ENCODE measurements at regions of chr20 and their contacts with region 1.

Region 1: GRCh38 chr20:15902493-15902892 is 670.8 kb downstream of the KIF16B start:
- DNase-seq: no peak
- H3K4me3 ChIP-seq: no peak overlapping the region
- H3K27ac ChIP-seq: no peak overlapping the region
- H3K4me1 ChIP-seq: no peaks in the 10 kb centered on the region
- H3K27me3 ChIP-seq: no peaks in the 10 kb centered on the region
- CTCF ChIP-seq: no peak
- POLR2A ChIP-seq: no peak

Region 2: GRCh38 chr20:14113416-14113815 is 1789.1 kb before region 1 on chr20:
- intact Hi-C with region 1: loop called (anchors 5 kb)
- DNase-seq: no peak
- H3K4me3 ChIP-seq: no peak overlapping the region
- H3K27ac ChIP-seq: no peak overlapping the region
- H3K4me1 ChIP-seq: no peaks in the 10 kb centered on the region
- H3K27me3 ChIP-seq: no peaks in the 10 kb centered on the region
- CTCF ChIP-seq: no peak
- POLR2A ChIP-seq: no peak

Region 3: DNA sequence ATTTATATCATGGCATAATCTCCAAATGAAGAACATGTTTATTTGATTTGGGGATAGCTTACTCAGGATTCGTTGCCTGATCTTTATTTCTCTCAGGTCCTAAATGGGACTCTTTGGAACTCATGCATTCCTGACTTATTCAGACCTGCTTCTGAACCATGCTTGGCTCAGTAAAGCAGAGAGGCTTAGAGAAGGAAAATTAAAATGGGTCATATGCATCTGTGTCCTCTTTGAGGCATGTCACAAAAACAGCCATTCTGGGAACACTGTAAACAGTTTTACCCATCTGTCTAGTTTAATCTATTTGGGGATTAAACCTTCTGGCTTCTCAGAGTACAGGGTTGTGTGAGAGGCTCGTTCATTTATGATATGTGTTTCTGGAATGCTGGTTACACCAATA is 346.6 kb before region 1 on chr20:
- intact Hi-C with region 1: no loop called
- DNase-seq: no peak
- H3K4me3 ChIP-seq: no peak overlapping the region
- H3K27ac ChIP-seq: no peak overlapping the region
- H3K4me1 ChIP-seq: no peaks in the 10 kb centered on the region
- H3K27me3 ChIP-seq: no peaks in the 10 kb centered on the region
- CTCF ChIP-seq: no peak
- POLR2A ChIP-seq: no peak

Region 4: DNA sequence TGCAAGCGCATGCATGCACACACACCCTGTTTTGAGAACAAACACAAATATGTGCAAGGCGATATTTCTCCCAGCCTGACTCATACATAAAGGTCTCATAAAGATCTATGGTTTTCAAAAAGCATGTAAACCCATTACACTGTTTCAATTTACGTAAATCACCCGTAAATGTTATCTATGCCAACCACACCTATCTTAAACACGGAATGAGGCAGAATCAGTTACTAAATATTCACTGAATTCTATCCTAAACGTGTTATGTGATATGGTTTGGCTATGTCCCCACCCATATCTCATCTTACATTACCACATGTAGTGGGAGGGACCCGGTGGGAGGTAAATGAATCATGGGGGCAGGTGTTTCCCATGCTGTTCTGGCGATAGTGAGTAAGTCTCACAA is 49.2 kb after region 1 on chr20:
- intact Hi-C with region 1: no loop called
- DNase-seq: no peak
- H3K4me3 ChIP-seq: no peak overlapping the region
- H3K27ac ChIP-seq: no peak overlapping the region
- H3K4me1 ChIP-seq: no peaks in the 10 kb centered on the region
- H3K27me3 ChIP-seq: no peaks in the 10 kb centered on the region
- CTCF ChIP-seq: no peak
- POLR2A ChIP-seq: no peak